ENCODE measurements at regions of chr11 and their contacts with region 1.

Region 1: GRCh38 chr11:119356349-119357031 is 10.0 kb upstream of the MFRP start:
- DNase-seq: no peak
- H3K4me3 ChIP-seq: peak overlapping the region; percentile 53
- H3K27me3 ChIP-seq: peaks cover 4% of the 10 kb centered on the region; the same call in 1 of the 2 replicates
- CTCF ChIP-seq: peak; percentile 75

Region 2: GRCh38 chr11:119205574-119206510 is 150.6 kb before region 1 on chr11 and contains the start of gene CBL:
- CTCF ChIA-PET with region 1: interaction called, 4 read pairs
- POLR2A ChIA-PET with region 1: interaction called, 12 read pairs
- DNase-seq: peak; percentile 31
- H3K4me3 ChIP-seq: peak within 1 kb of the TSS; percentile 98
- H3K27me3 ChIP-seq: no peaks in the 10 kb centered on the region
- CTCF ChIP-seq: peak; percentile 98
- polyA plus RNA-seq, gene CBL: 9.3 and 11.4 TPM in 2 replicates

Region 3: DNA sequence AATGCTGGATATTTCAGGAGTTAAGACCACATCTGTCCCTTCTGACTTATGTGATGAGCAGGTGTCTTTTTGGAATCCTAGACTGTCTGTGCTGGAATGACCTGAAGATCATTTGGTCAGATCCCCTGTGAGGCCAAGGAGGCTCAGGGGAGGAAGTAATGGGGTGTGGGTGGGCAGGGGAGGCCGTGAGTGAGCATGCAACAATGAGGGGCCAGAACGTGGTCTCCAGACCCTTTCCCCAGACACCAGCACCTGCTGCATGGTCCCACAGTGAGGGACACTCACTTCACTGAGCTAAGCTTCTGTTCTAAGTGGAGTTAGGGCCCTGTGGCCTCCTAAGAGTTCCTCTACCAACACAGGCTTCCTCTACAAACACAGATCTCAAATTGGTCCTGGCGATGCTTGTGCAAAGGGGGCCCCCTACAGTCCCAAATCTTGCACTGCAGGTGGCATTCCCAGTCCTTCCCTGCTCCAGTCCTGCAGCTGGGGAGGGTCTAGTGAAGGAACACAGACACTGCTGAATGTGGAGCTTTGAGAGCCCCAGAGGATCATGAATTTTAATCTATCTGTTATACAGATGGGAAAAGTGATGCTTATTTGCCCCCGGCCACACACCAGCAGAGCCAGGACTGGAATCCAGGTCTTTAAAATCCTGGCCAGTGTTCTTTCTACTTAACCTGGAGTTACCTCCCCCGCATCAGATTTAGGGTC is 17.6 kb after region 1 on chr11:
- CTCF ChIA-PET with region 1: interaction called, 349 read pairs
- POLR2A ChIA-PET with region 1: no interaction called
- DNase-seq: no peak
- H3K4me3 ChIP-seq: no peak overlapping the region
- H3K27me3 ChIP-seq: no peaks in the 10 kb centered on the region; the same call in 1 of the 2 replicates
- CTCF ChIP-seq: peak; percentile 93

Region 4: GRCh38 chr11:119381181-119381988 is 24.9 kb after region 1 on chr11 and contains the start of gene USP2:
- CTCF ChIA-PET with region 1: interaction called, 349 read pairs
- POLR2A ChIA-PET with region 1: no interaction called
- DNase-seq: peak; percentile 90
- H3K4me3 ChIP-seq: peak within 1 kb of the TSS; percentile 47
- H3K27me3 ChIP-seq: peaks cover 5% of the 10 kb centered on the region; the same call in 1 of the 2 replicates
- CTCF ChIP-seq: peak; percentile 89
- polyA plus RNA-seq, gene USP2: 0.27 and 0.71 TPM in 2 replicates

Region 5: GRCh38 chr11:119421941-119422808 is 65.7 kb after region 1 on chr11:
- CTCF ChIA-PET with region 1: interaction called, 16 read pairs
- POLR2A ChIA-PET with region 1: no interaction called
- DNase-seq: no peak
- H3K4me3 ChIP-seq: peak overlapping the region; percentile 85
- H3K27me3 ChIP-seq: no peaks in the 10 kb centered on the region
- CTCF ChIP-seq: 0 out of 2 replicates have a peak, but pooled peaks have one; percentile 4

Region 6: DNA sequence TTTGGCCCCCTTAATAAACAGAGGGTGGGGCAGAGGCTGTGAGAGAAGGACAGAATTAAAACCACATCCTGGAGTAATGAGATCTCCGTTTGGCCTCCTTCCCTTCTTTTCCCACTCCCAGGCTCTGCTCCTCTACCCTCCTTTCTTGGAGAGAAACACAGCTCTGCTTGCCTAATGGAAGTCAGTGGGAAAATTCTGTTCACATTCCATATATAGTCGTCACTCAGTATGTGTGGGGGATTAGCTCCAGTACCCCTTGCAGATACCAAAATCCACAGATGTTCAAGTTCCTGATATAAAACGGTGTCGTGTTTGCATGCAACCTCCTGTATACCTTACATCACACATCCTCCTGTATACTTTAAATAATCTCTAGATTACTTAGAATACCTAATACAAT is 104.1 kb after region 1 on chr11:
- CTCF ChIA-PET with region 1: interaction called, 18 read pairs
- POLR2A ChIA-PET with region 1: no interaction called
- DNase-seq: no peak
- H3K4me3 ChIP-seq: no peak overlapping the region
- H3K27me3 ChIP-seq: no peaks in the 10 kb centered on the region
- CTCF ChIP-seq: no peak